ENCODE measurements at regions of chr11 and their contacts with region 1.

Region 1: DNA sequence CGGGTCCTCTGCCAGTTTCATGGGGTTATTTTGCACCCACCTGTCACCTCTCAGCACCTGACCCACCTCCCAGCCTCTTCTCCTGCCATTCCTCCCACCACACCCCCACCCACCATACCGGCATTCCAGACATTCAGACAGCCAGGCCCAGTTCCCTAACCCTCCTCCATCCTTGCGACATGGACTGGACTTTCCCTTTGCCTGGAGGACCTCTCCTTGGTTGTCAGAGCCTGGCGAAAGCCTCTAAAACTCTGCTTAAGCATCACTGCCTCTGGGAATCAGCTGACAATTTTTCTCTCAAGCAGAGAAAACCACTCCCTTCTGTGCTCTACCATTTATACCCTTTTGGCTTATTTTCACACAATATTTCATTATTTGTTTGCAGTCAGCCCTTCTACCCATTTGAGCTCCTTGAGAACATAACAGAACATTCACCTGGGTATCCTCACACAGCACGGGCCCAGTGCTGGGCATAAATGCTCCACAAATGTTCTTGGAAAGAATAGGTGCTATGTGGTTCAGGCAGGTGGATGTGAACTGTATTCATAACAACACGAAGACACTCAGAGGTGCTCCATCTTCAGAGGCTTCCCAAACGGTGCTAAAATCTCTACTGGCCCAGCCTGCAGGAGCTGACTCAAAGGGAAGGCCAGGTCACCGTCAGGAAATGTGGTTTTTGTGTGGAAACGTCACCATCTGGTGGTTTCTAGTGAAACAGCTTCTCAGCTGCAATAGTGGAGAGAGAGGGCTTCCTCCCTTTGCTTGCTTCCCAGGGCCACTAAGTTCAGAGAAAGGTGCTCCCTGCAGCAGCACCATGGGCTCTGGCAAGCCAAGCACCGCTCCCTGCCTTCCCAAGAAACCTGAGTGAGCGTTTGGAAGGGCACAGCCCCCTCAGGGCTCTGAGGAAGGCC is 10.4 kb downstream of the SPATA19 start:
- DNase-seq: peak; percentile 44 to 77 (median 59)
- H3K4me3 ChIP-seq: no peak overlapping the region
- H3K27ac ChIP-seq: no peak overlapping the region
- H3K4me1 ChIP-seq: no peaks in the 10 kb centered on the region
- H3K27me3 ChIP-seq: no peaks in the 10 kb centered on the region
- CTCF ChIP-seq: peak; percentile 52 to 75 (median 62)
- POLR2A ChIP-seq: no peak

Region 2: DNA sequence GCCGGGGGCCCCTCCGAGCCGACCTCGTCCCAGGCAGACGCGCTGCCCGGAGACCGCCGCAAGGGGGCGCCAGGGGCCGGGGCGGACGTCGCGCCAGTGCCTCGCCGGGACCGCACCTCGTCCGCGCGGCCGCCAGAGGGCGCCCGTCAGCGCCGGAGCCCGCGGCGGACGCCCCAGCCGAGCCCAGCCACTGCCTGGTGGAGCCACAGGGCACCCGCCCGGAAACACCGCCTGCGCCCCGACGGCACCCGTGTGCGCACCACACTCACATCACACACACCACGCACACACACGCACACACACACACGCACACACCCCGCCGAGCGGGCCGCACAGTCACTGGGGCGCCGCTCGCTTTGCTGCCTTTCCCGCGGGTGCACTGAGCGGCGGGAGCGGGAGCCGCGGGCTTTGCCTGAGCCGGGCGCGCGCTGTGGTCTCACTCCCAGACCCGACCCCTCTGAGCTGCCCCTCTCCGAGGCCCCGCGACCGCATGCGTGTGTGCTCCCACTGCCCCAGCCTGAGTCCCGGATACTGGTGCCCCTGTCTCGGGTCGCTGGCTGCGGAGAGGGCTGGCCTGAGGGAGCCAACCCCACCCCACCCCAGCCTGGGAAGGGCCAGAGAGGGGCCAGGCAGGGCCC is 752.0 kb before region 1 on chr11:
- intact Hi-C with region 1: loop called (anchors 5 to 10 kb)
- DNase-seq: peak; percentile 29 to 70 (median 66)
- H3K4me3 ChIP-seq: peak overlapping the region in 1 of 4 donors; percentile 55
- H3K27ac ChIP-seq: no peak overlapping the region
- H3K4me1 ChIP-seq: no peaks in the 10 kb centered on the region
- H3K27me3 ChIP-seq: peaks cover 25% of the 10 kb centered on the region
- CTCF ChIP-seq: peak in 4 of 6 experiments; percentile 25 to 99 (median 96)
- POLR2A ChIP-seq: no peak

Region 3: GRCh38 chr11:133134314-133135173 is 700.4 kb before region 1 on chr11:
- intact Hi-C with region 1: loop called in 1 of 2 experiments (anchors 5 kb)
- DNase-seq: peak; percentile 38 to 79 (median 66)
- H3K4me3 ChIP-seq: no peak overlapping the region
- H3K27ac ChIP-seq: no peak overlapping the region
- H3K4me1 ChIP-seq: no peaks in the 10 kb centered on the region
- H3K27me3 ChIP-seq: no peaks in the 10 kb centered on the region
- CTCF ChIP-seq: peak; percentile 70 to 83 (median 76)
- POLR2A ChIP-seq: no peak

Region 4: GRCh38 chr11:134275534-134276395 is 440.8 kb after region 1 on chr11 and contains the start of gene GLB1L3:
- intact Hi-C with region 1: no loop called
- DNase-seq: peak in 2 of 7 donors; percentile 17 to 74
- H3K4me3 ChIP-seq: peak within 1 kb of the TSS in 1 of 4 donors; percentile 37
- H3K27ac ChIP-seq: peak within 1 kb of the TSS in 1 of 5 donors; percentile 30
- H3K4me1 ChIP-seq: peaks cover 0 to 17% of the 10 kb centered on the region in 2 donors
- H3K27me3 ChIP-seq: peaks cover 74% of the 10 kb centered on the region
- CTCF ChIP-seq: peak in 1 of 6 experiments; percentile 14
- POLR2A ChIP-seq: no peak
- total RNA-seq, gene GLB1L3: 0.06 to 0.64 (median 0.19) TPM in 4 of 9 donors, not detected in the others

Measured in adrenal gland (tissue), 19 donors.